ENCODE measurements at regions of chr2 and their contacts with region 1.

Region 1: GRCh38 chr2:48482313-48482712 is 47.6 kb upstream of the STON1 start:
- DNase-seq: no peak
- ATAC-seq: peak; percentile 30
- H3K4me3 ChIP-seq: no peak overlapping the region
- H3K27ac ChIP-seq: no peak overlapping the region
- H3K4me1 ChIP-seq: no peaks in the 10 kb centered on the region
- H3K27me3 ChIP-seq: no peaks in the 10 kb centered on the region

Region 2: DNA sequence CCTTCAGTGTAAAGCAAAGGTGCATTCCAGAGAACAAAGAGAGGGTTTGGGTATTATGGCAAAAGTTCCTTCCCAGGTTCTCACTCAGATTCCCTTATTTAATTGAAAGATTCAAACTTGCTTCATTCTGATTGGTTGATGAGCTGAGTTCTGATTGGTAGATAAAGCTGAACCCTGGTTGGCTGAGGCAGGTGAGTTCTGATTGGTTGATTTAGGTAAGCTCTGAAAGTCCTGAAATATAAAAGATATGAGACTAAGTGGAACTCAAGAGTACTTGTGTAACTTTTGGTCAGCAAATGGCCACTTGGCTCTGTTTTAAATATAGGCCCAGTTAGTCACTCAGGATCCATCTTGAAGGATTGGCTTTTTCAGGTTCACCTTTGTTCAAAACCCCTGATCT is 476.2 kb before region 1 on chr2:
- intact Hi-C with region 1: no loop called
- DNase-seq: no peak
- ATAC-seq: no peak
- H3K4me3 ChIP-seq: no peak overlapping the region
- H3K27ac ChIP-seq: no peak overlapping the region
- H3K4me1 ChIP-seq: no peaks in the 10 kb centered on the region
- H3K27me3 ChIP-seq: no peaks in the 10 kb centered on the region

Region 3: DNA sequence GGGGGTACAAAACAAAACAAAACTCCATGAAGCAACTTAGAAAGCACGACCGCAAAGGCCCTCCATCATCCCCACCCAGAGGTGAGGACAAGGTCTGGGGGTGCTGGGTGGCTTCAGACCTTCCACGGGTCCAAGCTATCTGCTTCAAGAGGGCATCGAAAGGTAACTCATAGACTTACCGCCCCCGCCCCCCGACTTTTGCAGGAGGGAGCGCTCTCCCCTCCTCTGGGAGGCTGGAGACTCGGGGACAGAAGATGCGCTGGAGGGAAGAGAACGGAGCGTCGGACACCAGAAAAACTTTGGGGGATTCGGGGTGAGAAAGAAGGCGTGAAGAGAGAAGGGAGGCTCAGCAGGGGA is 47.3 kb after region 1 on chr2:
- intact Hi-C with region 1: loop called in 1 of 2 experiments (anchors 5 kb)
- DNase-seq: no peak
- ATAC-seq: peak; percentile 9
- H3K4me3 ChIP-seq: peak overlapping the region; percentile 70 to 97
- H3K27ac ChIP-seq: peak overlapping the region in 1 of 2 donors; percentile 65
- H3K4me1 ChIP-seq: peaks cover 0 to 3% of the 10 kb centered on the region in 2 donors
- H3K27me3 ChIP-seq: no peaks in the 10 kb centered on the region